Activated naive CD4-positive, alpha-beta T cell treated with anti-CD3 and anti-CD28 coated beads for 36 hours (primary cell): ENCODE measurements at regions of chr13 and their contacts with region 1.

Region 1: GRCh38 chr13:99436686-99437416 is 64.4 kb upstream of the TM9SF2 start:
- DNase-seq: peak; percentile 98
- H3K4me3 Mint-ChIP-seq: peak overlapping the region; percentile 21
- H3K27ac Mint-ChIP-seq: peak overlapping the region; percentile 23
- H3K4me1 Mint-ChIP-seq: peaks cover 55% of the 10 kb centered on the region
- H3K27me3 Mint-ChIP-seq: no peaks in the 10 kb centered on the region

Region 2: DNA sequence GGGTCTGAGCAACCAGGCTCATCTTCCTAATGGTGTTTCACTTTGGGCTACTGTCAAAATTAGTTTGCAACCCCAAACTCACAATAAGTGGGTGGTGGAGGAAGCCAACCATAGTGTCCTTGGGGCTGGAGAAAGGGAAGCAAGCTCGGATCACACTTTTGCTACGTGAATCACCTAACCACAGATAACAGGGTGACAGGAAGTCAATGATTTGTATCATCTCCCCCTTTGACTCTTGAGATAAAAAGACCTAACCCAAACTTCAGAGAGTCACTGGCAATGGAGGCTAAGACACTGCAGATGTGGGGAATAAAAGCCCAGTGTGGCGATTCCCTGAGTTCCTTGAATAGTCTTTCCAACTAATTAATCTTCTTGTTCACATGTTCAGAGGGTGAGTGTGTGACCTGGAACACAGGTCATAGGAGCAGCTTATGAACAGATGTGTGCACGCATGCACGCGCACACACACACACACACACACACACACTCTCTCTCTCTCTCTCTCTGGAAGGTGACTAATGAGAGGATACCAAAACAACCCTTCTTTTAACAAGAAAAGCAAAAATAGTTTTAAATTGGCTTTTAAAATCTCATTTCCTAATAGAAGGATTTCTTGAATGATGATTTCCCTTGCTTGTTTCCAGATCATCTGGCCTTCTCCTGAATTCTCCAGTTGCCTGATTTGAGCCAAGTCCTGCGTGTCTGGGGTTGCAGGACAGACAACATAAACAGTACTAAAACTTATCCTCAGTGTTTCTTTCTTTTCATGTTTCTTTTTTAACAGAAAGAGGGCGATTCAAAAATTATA is 437.8 kb before region 1 on chr13:
- CTCF ChIA-PET with region 1: no interaction called
- intact Hi-C with region 1: loop called (anchors 1 kb)
- DNase-seq: peak; percentile 66
- H3K4me3 Mint-ChIP-seq: no peak overlapping the region
- H3K27ac Mint-ChIP-seq: peak overlapping the region; percentile 67
- H3K4me1 Mint-ChIP-seq: peaks cover 92% of the 10 kb centered on the region
- H3K27me3 Mint-ChIP-seq: no peaks in the 10 kb centered on the region

Region 3: DNA sequence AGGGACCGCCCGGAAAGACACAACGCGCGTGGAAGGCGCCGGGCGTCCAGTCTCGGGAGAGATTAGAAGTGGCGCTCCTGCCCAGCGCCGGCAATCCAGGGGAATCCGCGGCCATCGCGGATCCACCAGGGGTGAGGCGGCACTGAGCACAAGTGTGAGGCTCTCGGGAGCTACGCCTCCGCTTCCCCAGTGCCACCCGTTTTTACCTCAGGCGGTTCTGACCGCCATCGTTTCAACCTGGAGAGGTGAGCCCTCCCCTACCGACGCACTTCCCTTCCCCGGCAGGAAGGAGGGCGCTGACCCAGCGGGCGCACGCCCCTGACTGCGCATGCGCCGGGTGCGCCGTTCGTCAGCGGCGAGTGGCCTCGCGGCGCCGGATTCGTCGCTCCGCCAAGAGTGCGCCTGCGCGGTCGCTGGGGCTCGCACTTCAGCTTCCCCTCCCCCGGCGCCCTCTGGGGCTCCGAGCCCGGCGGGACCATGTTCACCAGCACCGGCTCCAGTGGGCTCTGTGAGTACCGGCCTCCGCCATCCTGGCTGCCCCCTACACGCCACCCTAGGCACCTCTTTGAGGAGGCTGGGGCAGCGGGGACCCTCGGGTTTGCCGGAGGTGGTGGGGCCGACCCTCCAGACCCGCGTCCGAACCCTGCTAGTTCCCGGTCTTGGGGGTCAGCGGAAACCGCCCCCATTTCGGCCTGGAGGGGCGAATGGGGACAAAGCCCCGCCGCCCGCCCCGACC is 236.3 kb before region 1 on chr13 and contains the start of gene UBAC2:
- CTCF ChIA-PET with region 1: interaction called, 6 read pairs
- intact Hi-C with region 1: loop called (anchors 1 kb)
- DNase-seq: peak; percentile 95
- H3K4me3 Mint-ChIP-seq: peak within 1 kb of the TSS; percentile 91
- H3K27ac Mint-ChIP-seq: peak within 1 kb of the TSS; percentile 90
- H3K4me1 Mint-ChIP-seq: peaks cover 60% of the 10 kb centered on the region
- H3K27me3 Mint-ChIP-seq: no peaks in the 10 kb centered on the region
- total RNA-seq, gene UBAC2: 43.4 to 44.9 TPM

Region 4: GRCh38 chr13:99296398-99296797 is 140.5 kb before region 1 on chr13:
- CTCF ChIA-PET with region 1: interaction called, 59 read pairs
- intact Hi-C with region 1: loop called (anchors 1 kb)
- DNase-seq: no peak
- H3K4me3 Mint-ChIP-seq: peak overlapping the region; percentile 48
- H3K27ac Mint-ChIP-seq: peak overlapping the region; percentile 87
- H3K4me1 Mint-ChIP-seq: peaks cover 75% of the 10 kb centered on the region
- H3K27me3 Mint-ChIP-seq: no peaks in the 10 kb centered on the region

Region 5: GRCh38 chr13:99356158-99357091 is 80.4 kb before region 1 on chr13:
- CTCF ChIA-PET with region 1: interaction called, 15 read pairs
- intact Hi-C with region 1: loop called (anchors 1 kb)
- DNase-seq: peak; percentile 70
- H3K4me3 Mint-ChIP-seq: peak overlapping the region; percentile 58
- H3K27ac Mint-ChIP-seq: peak overlapping the region; percentile 93
- H3K4me1 Mint-ChIP-seq: peaks cover 97% of the 10 kb centered on the region
- H3K27me3 Mint-ChIP-seq: no peaks in the 10 kb centered on the region

Region 6: DNA sequence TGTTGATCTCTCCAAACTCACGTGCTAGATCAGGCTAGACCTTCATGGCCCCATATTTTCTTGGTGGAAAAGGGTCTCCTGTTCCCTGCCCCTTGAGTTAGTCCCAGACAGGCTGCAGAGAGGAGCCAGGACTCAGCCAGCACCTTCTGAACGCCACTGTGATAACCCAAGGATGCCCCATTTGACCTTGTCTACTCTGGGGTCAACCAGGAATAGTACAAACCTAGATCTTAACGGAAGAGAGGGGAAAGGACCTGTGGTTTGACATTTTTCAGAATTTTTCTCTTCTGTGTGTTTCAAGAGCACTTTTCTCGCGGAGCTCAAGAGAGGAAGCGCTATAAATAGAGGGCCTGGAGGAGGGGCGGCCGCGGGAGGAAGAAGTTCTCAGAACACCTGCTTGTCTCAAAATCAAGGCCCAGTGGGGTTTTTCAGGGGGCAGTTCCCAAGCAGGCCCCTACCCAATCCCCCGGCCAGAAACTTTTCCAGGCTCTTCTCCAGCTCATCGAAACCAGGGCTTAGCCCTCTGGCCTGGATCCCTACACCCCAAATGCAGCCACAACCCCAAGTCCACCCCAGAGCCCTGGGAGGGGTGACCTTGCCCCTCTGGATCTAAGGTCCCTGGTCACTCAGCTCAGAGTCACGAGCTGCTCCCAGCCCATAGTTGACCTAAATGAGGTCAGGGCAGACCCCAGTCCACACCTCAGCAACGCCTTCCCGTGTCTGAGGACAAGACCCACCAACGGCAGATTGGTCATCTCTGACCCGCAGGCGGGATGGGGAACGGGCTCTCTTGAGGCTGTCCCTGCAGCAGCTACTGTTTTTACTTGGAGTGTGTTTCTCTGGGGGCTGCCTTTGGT is 11.1 kb before region 1 on chr13:
- CTCF ChIA-PET with region 1: interaction called, 118 read pairs
- intact Hi-C with region 1: loop called (anchors 1 kb)
- DNase-seq: peak; percentile 84
- H3K4me3 Mint-ChIP-seq: peak overlapping the region; percentile 74
- H3K27ac Mint-ChIP-seq: peak overlapping the region; percentile 97
- H3K4me1 Mint-ChIP-seq: peaks cover 63% of the 10 kb centered on the region
- H3K27me3 Mint-ChIP-seq: no peaks in the 10 kb centered on the region

Region 7: GRCh38 chr13:99738626-99739025 is 301.8 kb after region 1 on chr13:
- CTCF ChIA-PET with region 1: no interaction called
- intact Hi-C with region 1: no loop called
- DNase-seq: no peak
- H3K4me3 Mint-ChIP-seq: no peak overlapping the region
- H3K27ac Mint-ChIP-seq: no peak overlapping the region
- H3K4me1 Mint-ChIP-seq: no peaks in the 10 kb centered on the region
- H3K27me3 Mint-ChIP-seq: no peaks in the 10 kb centered on the region